Activated T-helper 2 cell treated with anti-CD3 and anti-CD28 coated beads, Interferon-gamma antibody, Interleukin-2, Interleukin-4, amounts not matched to agents 10 μg/mL and 5 μg/mL and 100 μg/mL, durations not matched to agents 14 hours and 24 hours and 36 hours (primary cell): ENCODE measurements at regions of chr10 and their contacts with region 1.

Region 1: DNA sequence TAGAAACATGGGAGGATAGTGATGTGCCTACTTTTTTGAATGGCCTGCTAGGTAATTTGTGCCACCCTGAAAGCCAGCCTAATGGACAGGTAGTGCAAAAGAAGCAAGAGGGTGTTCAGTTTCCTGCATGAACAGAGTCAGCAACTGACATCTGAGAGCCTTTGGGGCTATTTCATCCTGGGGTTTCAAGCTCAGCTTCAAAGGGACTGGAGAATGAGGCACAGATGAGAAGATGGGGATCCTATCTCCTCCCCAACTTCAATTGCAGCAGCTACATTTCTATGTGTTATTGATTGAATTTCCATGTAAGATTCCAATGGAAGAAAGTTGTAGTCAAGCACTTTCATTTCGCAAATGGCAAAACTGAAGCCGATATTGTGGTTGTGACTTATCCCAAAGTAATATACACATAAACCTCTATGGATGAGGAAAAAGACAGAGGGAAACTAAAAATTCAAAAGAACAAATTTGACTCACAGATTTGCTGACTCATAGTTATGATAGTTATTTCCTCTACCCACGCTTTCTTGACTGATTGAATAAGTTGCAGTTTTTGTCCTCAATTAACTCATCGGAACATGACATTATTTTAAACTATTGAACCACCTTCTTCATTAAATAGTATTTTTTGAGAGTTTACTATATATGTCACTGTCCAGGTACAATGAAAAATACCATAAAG is 42.6 kb upstream of the NRP1 start:
- DNase-seq: no peak
- H3K4me3 Mint-ChIP-seq: no peak overlapping the region
- H3K27ac Mint-ChIP-seq: peak overlapping the region; percentile 39
- H3K4me1 Mint-ChIP-seq: peaks cover 28% of the 10 kb centered on the region
- H3K27me3 Mint-ChIP-seq: peaks cover 6% of the 10 kb centered on the region

Region 2: GRCh38 chr10:33412653-33413361 is 35.7 kb after region 1 on chr10:
- intact Hi-C with region 1: loop called (anchors 5 kb)
- DNase-seq: no peak
- H3K4me3 Mint-ChIP-seq: no peak overlapping the region
- H3K27ac Mint-ChIP-seq: no peak overlapping the region
- H3K4me1 Mint-ChIP-seq: peaks cover 2% of the 10 kb centered on the region
- H3K27me3 Mint-ChIP-seq: peaks cover 37% of the 10 kb centered on the region